Activated T-helper 2 cell treated with anti-CD3 and anti-CD28 coated beads, Interferon-gamma antibody, Interleukin-2, Interleukin-4, amounts not matched to agents 10 μg/mL and 5 μg/mL and 100 μg/mL, durations not matched to agents 14 hours and 24 hours and 36 hours (primary cell): ENCODE measurements at regions of chr14 and their contacts with region 1.

Region 1: GRCh38 chr14:102774391-102775153 is 2.7 kb upstream of the TRAF3 start:
- DNase-seq: peak; percentile 52
- H3K4me3 Mint-ChIP-seq: no peak overlapping the region
- H3K27ac Mint-ChIP-seq: peak overlapping the region; percentile 84
- H3K4me1 Mint-ChIP-seq: peaks cover 30% of the 10 kb centered on the region
- H3K27me3 Mint-ChIP-seq: no peaks in the 10 kb centered on the region

Region 2: GRCh38 chr14:102675396-102675795 is 99.2 kb before region 1 on chr14:
- intact Hi-C with region 1: no loop called
- DNase-seq: no peak
- H3K4me3 Mint-ChIP-seq: no peak overlapping the region
- H3K27ac Mint-ChIP-seq: no peak overlapping the region
- H3K4me1 Mint-ChIP-seq: peaks cover 5% of the 10 kb centered on the region
- H3K27me3 Mint-ChIP-seq: no peaks in the 10 kb centered on the region

Region 3: DNA sequence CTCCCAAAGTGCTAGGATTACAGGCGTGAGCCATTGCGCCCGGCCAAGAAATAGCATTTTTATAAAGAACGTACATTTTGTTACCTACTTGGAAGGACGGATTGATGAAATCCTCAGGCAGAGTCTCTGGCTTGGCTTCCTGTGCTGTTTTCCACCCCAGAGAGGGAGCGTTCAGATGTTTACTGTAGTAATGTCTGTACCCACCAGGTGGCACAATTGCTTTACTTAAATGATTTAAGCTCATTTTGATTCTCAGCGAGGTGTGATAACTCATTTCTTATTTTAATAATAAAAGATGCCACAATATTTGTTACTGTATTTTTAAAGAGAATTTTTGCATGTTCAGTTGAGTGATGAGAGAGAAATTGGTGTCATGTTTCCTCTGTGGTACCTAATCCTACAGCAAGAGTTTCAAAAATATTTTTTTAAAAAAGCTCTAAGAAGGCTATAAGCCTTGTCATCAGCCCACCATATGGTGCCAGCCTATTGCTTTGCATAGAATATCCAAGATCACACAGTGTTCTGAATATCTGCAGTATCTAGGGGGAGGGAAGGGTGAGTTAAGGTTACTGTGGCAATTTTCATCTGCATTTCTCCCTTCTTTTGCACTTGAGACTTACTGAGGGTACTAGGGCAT is 79.9 kb before region 1 on chr14:
- intact Hi-C with region 1: loop called (anchors 1 kb)
- DNase-seq: peak; percentile 26
- H3K4me3 Mint-ChIP-seq: no peak overlapping the region
- H3K27ac Mint-ChIP-seq: no peak overlapping the region
- H3K4me1 Mint-ChIP-seq: peaks cover 27% of the 10 kb centered on the region
- H3K27me3 Mint-ChIP-seq: no peaks in the 10 kb centered on the region

Region 4: DNA sequence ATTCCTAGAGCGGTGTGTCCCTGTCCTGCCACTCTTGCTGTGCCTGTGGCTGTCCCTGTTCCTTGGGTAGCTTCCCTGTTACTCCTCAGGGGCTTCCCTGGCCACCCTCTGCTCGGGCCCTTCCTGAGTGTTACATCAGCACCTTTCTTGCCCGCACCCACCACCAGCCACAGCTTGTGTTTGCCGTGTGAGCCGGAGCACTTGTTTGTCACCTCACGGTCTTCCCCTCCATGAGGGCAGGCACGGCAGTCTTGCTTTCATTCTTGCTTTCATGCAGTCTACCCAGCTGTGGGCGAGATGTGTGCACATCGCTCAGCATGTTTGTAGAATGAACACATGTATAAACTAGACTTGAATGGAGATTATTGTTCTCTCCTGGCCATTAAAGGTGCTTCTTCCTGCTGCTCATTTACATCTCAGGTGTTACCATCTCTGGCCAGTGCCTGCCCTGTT is 44.6 kb after region 1 on chr14:
- intact Hi-C with region 1: loop called (anchors 1 kb)
- DNase-seq: peak; percentile 50
- H3K4me3 Mint-ChIP-seq: peak overlapping the region; percentile 59
- H3K27ac Mint-ChIP-seq: peak overlapping the region; percentile 88
- H3K4me1 Mint-ChIP-seq: peaks cover 65% of the 10 kb centered on the region
- H3K27me3 Mint-ChIP-seq: no peaks in the 10 kb centered on the region

Region 5: GRCh38 chr14:102882226-102882906 is 107.8 kb after region 1 on chr14:
- intact Hi-C with region 1: loop called (anchors 10 kb)
- DNase-seq: no peak
- H3K4me3 Mint-ChIP-seq: no peak overlapping the region
- H3K27ac Mint-ChIP-seq: peak overlapping the region; percentile 20
- H3K4me1 Mint-ChIP-seq: peaks cover 16% of the 10 kb centered on the region
- H3K27me3 Mint-ChIP-seq: no peaks in the 10 kb centered on the region